Heart left ventricle (tissue), 16 donors: ENCODE measurements at regions of chr10 and their contacts with region 1.

Region 1: DNA sequence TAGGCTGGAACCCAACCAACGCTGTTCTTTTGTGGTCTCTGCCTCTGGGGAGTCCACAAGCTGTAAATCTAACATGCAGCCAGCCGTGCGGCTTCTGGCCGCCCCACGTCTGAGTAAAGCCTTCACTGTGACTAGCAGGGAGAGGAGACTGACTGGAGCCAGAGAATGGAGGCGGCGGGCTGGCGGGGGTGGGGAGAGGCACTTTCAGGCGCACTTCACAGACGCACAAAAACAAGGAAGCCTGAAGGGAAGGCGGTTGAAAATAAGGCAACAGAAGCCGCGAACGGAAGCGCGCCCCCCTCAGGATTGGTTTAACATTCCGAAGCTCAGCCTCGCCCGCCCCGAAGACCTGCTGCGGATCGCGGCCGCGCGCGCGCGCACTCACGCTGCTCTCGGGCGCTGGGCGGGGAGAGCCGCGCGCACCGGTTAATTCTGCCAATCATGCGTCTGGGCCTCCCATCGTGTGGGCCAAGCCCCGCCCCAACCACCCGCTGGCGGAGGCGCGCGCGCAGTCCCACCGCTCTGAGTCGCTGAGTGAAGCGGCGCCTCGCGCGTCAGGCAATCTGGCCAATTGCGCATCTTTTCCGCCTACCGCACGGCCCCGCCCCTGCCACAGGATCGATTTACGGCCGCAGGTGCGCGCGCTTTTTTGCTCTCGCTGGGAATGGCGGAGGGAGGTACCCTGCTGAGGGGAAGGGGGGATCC is at the start of gene SFR1:
- DNase-seq: peak; percentile 98 to 99 (median 99)
- ATAC-seq: peak; percentile 96 to 99 (median 96)
- H3K4me3 ChIP-seq: peak within 1 kb of the TSS; percentile 47 to 87 (median 76)
- H3K27ac ChIP-seq: peak within 1 kb of the TSS; percentile 91 to 99 (median 97)
- H3K4me1 ChIP-seq: peaks cover 0 to 28% (median 9%) of the 10 kb centered on the region in 12 donors
- H3K27me3 ChIP-seq: no peaks in the 10 kb centered on the region
- CTCF ChIP-seq: peak; percentile 39 to 84 (median 64)
- POLR2A ChIP-seq: peak; percentile 43 to 90
- total RNA-seq, gene SFR1: 5.4 to 10.1 (median 7.6) TPM

Region 2: DNA sequence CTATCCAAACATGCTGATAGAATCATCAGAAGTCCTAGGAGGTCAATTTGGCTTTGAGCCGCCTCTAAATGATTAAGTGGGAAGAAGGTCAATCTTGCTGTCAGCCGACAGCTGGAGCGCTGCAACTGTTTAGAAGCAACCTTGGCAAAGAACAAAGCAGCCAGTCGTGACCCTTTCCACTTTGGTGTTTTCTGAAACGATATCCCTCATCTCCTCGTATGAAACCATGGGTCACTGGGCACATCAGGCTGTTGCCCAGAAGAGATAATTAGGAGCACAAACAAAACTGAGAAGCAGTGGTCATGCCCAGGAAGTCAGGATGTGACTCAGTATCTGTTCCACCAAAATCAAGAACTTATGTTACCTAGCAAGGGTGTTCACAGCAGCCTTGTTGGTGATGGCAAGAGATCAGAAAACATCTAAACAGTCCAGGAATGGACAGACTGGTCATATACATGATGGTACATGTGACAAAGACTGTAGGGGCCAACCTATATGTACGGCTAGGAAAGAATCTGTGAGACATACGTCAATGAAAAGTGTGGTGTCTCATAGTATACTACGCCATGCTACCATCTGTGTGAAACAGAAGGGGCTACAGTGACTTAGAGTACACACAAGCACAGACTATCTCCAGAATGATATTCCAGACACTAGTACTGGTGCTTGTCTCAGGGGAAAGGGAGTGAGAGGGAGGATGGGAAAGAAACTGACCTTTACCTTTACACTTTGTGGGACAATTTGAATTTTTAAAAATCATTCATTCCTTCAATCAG is 226.1 kb before region 1 on chr10:
- intact Hi-C with region 1: loop called in 5 of 10 experiments (anchors 5 to 10 kb)
- DNase-seq: peak in 1 of 5 donors; percentile 51
- ATAC-seq: peak in 3 of 4 donors; percentile 26 to 45 (median 42)
- H3K4me3 ChIP-seq: no peak overlapping the region
- H3K27ac ChIP-seq: peak overlapping the region; percentile 43 to 90 (median 76)
- H3K4me1 ChIP-seq: peaks cover 14 to 57% (median 40%) of the 10 kb centered on the region in 12 donors
- H3K27me3 ChIP-seq: no peaks in the 10 kb centered on the region
- CTCF ChIP-seq: no peak
- POLR2A ChIP-seq: no peak

Region 3: GRCh38 chr10:103966671-103967447 is 154.8 kb before region 1 on chr10 and contains the start of gene SLK:
- intact Hi-C with region 1: loop called in 8 of 10 experiments (anchors 1 to 10 kb)
- DNase-seq: peak; percentile 87 to 93 (median 89)
- ATAC-seq: peak; percentile 81 to 98 (median 96)
- H3K4me3 ChIP-seq: peak within 1 kb of the TSS; percentile 83 to 99 (median 92)
- H3K27ac ChIP-seq: peak within 1 kb of the TSS; percentile 94 to 99 (median 96)
- H3K4me1 ChIP-seq: peaks cover 0 to 43% (median 33%) of the 10 kb centered on the region in 12 donors
- H3K27me3 ChIP-seq: no peaks in the 10 kb centered on the region
- CTCF ChIP-seq: no peak
- POLR2A ChIP-seq: peak; percentile 65 to 94
- total RNA-seq, gene SLK: 33.0 to 57.8 (median 47.9) TPM

Region 4: DNA sequence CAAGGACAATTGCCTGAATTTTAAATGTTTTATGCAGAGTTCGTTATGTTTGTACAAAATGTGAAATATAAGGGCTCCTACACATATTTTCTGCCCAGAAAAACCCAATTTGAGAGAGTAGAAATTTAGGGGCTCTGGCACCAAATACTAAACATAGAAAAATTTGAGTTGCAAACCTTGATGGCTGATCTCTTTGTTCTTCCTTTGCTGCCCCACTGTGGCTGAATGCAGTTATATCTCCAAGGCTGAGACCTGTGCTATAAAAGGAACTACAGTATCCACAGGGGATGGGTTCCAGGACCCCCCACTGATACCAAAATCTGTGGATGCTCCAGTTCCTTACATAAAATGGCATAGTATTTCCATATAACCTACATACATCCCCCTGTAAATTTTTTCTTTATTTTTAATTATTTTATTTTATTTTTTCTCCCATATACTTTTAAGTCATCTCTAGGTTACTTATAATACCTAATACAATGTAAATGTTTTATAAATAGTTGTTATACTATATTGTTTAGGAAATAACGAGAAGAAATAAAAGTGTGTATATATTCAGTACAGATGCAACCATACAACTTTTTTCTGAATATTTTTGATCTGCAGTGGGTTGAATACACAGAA is 88.0 kb after region 1 on chr10:
- intact Hi-C with region 1: no loop called
- DNase-seq: peak in 2 of 5 donors; percentile 20 to 33
- ATAC-seq: peak in 3 of 4 donors; percentile 49 to 71 (median 68)
- H3K4me3 ChIP-seq: no peak overlapping the region
- H3K27ac ChIP-seq: no peak overlapping the region
- H3K4me1 ChIP-seq: peaks cover 0 to 4% (median 0%) of the 10 kb centered on the region in 12 donors
- H3K27me3 ChIP-seq: no peaks in the 10 kb centered on the region
- CTCF ChIP-seq: peak; percentile 30 to 70 (median 52)
- POLR2A ChIP-seq: no peak

Region 5: GRCh38 chr10:104231784-104232612 is 110.3 kb after region 1 on chr10 and contains the start of gene CFAP43:
- intact Hi-C with region 1: loop called in 1 of 10 experiments (anchors 5 kb)
- DNase-seq: peak; percentile 98 to 100 (median 98)
- ATAC-seq: peak; percentile 100
- H3K4me3 ChIP-seq: peak within 1 kb of the TSS; percentile 61 to 93 (median 84)
- H3K27ac ChIP-seq: peak within 1 kb of the TSS in 3 of 12 donors; percentile 10 to 64 (median 47)
- H3K4me1 ChIP-seq: peaks cover 0 to 11% (median 5%) of the 10 kb centered on the region in 12 donors
- H3K27me3 ChIP-seq: peaks cover 0 to 7% (median 0%) of the 10 kb centered on the region in 9 donors
- CTCF ChIP-seq: no peak
- POLR2A ChIP-seq: peak in 1 of 2 donors; percentile 28
- total RNA-seq, gene CFAP43: 0.19 to 0.84 (median 0.25) TPM in 3 of 9 donors, not detected in the others

Region 6: DNA sequence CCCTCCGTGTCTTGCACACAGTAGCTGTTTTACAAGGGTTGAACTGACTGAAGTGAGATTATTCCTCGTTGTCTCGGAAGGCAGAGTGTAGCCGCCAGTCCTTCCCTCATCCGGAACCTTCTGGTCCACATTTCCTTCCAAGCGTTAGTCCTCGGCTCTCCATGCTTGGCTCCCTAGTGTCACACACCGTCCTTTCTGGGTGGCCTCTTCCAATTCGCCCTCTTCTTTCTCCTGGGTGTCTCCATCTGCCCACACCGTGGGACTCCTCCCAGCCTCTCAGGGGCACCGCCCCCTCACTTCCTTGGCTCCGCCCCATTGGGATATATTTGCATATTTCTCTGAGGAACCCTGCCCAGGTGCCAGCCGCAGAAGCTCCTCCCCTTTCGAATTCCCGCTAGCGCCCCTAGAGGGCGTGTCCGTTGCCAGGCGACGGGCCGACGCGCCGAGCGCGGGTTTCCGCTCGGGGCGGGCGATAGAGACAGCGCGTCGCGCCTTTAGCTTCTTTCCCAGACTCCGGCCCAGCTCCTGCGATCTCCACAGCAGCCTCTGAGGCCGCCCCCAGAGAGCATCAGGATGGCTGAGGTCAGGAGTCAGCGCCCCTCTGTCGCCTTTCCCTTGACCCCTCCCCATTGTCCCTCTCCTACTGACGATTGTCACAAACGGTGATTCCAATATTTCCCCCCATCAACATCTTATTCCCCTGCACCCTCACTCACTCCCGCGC is 231.8 kb after region 1 on chr10 and contains the start of gene CFAP58:
- intact Hi-C with region 1: loop called in 2 of 10 experiments (anchors 5 to 10 kb)
- DNase-seq: peak; percentile 89 to 97 (median 92)
- ATAC-seq: peak; percentile 70 to 94 (median 92)
- H3K4me3 ChIP-seq: peak within 1 kb of the TSS in 11 of 12 donors; percentile 2 to 61 (median 46)
- H3K27ac ChIP-seq: peak within 1 kb of the TSS in 5 of 12 donors; percentile 3 to 66 (median 16)
- H3K4me1 ChIP-seq: peaks cover 0 to 57% (median 15%) of the 10 kb centered on the region in 12 donors
- H3K27me3 ChIP-seq: no peaks in the 10 kb centered on the region
- CTCF ChIP-seq: peak; percentile 58 to 95 (median 76)
- POLR2A ChIP-seq: peak in 1 of 2 donors; percentile 50
- total RNA-seq, gene CFAP58: 1.2 to 4.9 (median 3.2) TPM